Gastrocnemius medialis (tissue), 4 donors: ENCODE measurements at regions of chr2 and their contacts with region 1.

Region 1: DNA sequence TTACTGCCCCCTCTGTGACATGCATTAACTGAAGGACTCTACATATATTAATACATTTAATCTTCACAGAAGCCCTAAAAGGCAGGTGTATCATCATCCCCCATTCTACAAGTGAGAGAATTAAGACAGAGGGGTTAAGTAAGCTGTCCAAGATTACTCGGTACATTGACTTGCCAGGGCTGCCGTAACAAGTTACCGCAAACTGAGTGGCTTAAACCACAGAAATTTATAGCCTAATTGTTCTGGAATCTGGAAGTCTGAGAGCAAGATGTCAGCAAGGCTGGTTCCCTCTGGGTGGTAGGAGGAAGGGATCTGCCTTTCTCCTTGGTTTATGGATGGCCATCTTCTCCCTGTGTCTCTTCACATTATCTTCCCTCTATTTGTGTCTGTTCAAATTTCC is 605.5 kb downstream of the EPHA4 start:
- DNase-seq: no peak
- ATAC-seq: no peak
- H3K4me3 ChIP-seq: no peak overlapping the region
- H3K27ac ChIP-seq: no peak overlapping the region
- H3K4me1 ChIP-seq: peaks cover 0 to 5% of the 10 kb centered on the region in 2 donors
- H3K27me3 ChIP-seq: no peaks in the 10 kb centered on the region
- CTCF ChIP-seq: no peak
- POLR2A ChIP-seq: no peak

Region 2: GRCh38 chr2:219495531-219496122 is 1471.0 kb before region 1 on chr2:
- in situ Hi-C with region 1: no loop called
- intact Hi-C with region 1: no loop called
- DNase-seq: peak; percentile 51 to 78
- ATAC-seq: peak; percentile 25 to 27
- H3K4me3 ChIP-seq: no peak overlapping the region
- H3K27ac ChIP-seq: peak overlapping the region; percentile 91 to 100 (median 96)
- H3K4me1 ChIP-seq: peaks cover 39 to 44% of the 10 kb centered on the region in 2 donors
- H3K27me3 ChIP-seq: no peaks in the 10 kb centered on the region
- CTCF ChIP-seq: peak in 4 of 5 experiments; percentile 70 to 86 (median 75)
- POLR2A ChIP-seq: no peak

Region 3: DNA sequence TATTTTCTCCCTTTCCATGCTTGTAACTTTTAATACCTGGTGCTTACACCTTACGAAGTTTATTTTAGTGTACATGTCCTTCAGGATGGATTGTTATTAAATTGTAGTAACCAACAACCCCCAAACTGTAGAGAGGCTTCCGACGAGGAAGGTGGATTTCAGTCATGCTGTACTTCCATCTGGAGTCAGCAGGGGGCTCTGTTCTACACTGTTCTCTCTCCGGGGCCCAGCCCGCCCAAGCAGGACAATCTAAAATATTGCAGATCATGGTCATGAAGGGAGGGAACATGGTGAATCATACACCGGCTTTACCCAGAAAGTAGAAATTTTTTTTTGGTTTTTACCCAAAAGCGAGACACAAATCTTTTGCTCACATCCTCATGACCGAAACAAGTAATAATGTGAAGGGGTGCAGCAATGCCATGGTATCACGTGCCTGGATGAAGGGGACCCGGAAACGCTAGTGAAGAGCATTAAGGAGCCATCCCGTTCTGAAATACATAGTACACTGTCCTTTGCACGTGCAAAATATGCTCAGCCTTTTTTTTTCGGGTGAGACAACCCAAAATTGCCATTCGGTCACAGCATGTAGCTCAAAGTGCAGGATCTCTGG is 279.3 kb before region 1 on chr2:
- in situ Hi-C with region 1: loop called in 1 of 4 experiments (anchors 5 kb)
- intact Hi-C with region 1: loop called (anchors 5 kb)
- DNase-seq: peak; percentile 46 to 53
- ATAC-seq: peak; percentile 80 to 90
- H3K4me3 ChIP-seq: no peak overlapping the region
- H3K27ac ChIP-seq: no peak overlapping the region
- H3K4me1 ChIP-seq: no peaks in the 10 kb centered on the region
- H3K27me3 ChIP-seq: no peaks in the 10 kb centered on the region
- CTCF ChIP-seq: peak; percentile 62 to 87 (median 77)
- POLR2A ChIP-seq: no peak

Region 4: GRCh38 chr2:221372159-221372884 is 405.7 kb after region 1 on chr2:
- in situ Hi-C with region 1: no loop called
- intact Hi-C with region 1: no loop called
- DNase-seq: no peak
- ATAC-seq: no peak
- H3K4me3 ChIP-seq: no peak overlapping the region
- H3K27ac ChIP-seq: no peak overlapping the region
- H3K4me1 ChIP-seq: no peaks in the 10 kb centered on the region
- H3K27me3 ChIP-seq: no peaks in the 10 kb centered on the region
- CTCF ChIP-seq: no peak
- POLR2A ChIP-seq: no peak